MCF 10A (cell line): ENCODE measurements at regions of chr6 and their contacts with region 1.

Region 1: DNA sequence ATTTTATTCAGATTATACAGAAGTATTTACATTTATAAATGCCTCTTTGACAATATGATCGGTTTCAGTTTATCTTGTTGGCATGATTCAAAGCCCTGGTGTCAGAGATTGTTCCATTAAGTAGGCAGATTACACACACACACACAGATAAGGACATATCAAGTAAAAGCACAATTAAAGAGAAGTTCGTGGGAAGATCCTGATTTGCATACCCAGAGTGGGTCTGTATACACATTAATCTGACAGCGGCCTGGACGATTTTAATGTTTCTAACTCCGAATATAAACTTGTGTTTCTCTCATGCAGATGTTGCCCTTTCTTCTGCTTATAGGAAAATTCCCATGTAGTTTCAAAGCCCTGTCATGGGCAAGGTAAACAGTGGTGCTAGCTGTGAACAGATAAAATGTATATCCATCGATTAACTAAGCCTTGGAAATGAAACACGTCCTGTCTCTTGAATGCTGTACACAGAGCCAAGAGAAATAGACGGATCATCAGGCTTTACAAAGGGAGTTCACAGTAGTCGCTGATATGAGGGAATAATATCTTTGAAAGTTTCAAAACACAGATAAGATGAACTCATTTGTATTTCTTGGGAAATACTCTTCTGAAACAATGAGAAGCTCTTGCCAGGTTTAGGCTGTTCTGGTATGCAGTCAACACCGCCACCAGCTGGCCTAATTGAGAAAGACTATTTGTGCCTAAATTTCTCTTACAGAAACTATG is 108.2 kb upstream of the GMDS start:
- DNase-seq: peak; percentile 82
- H3K4me3 Mint-ChIP-seq: no peak overlapping the region
- H3K27ac Mint-ChIP-seq: no peak overlapping the region
- H3K4me1 Mint-ChIP-seq: peaks cover 9% of the 10 kb centered on the region
- H3K27me3 Mint-ChIP-seq: no peaks in the 10 kb centered on the region
- CTCF ChIP-seq: peak; percentile 85

Region 2: DNA sequence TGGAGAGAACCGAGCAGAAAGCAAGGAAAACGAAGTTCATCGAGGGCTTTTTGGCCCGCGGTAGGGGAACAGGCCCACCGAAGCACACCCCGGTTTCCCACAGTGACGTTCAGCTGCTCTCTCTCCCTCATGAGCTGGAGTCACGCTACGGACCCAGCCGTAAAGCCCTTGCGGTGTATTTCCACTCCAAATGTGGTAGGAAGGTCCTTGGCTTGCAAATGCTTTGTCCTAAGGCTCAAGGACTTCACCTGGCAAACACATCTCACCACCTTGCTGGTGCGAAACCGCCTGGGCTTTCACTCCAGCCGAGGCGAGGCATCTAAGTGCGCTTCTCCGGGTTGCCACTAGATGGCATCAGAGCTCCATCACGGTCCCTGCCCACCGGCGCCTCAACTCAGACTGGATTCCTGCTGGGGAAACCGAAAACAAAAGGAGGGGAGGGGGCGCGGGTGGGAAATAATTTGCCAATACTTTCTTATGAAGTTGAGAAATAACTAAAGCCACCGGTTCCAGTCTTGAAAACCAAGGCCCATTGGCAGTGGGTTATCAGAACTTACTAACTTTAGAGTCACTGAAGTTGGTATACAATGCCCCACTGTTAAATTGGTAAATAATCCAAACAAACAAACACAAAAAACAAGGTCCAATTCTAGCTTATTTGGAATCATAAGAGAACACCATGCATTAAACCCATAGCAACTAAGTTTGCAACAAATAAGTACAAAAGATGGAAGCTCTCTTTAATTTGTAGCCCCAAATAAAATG is 757.3 kb before region 1 on chr6:
- CTCF ChIA-PET with region 1: interaction called, 11 read pairs
- POLR2A ChIA-PET with region 1: interaction called, 4 read pairs
- intact Hi-C with region 1: loop called (anchors 2 kb)
- DNase-seq: peak; percentile 55
- H3K4me3 Mint-ChIP-seq: no peak overlapping the region
- H3K27ac Mint-ChIP-seq: no peak overlapping the region
- H3K4me1 Mint-ChIP-seq: peaks cover 28% of the 10 kb centered on the region
- H3K27me3 Mint-ChIP-seq: peaks cover 21% of the 10 kb centered on the region
- CTCF ChIP-seq: peak; percentile 93

Region 3: GRCh38 chr6:1792989-1793388 is 560.6 kb before region 1 on chr6:
- CTCF ChIA-PET with region 1: interaction called, 3 read pairs
- POLR2A ChIA-PET with region 1: no interaction called
- intact Hi-C with region 1: loop called (anchors 5 kb)
- DNase-seq: peak; percentile 62
- H3K4me3 Mint-ChIP-seq: no peak overlapping the region
- H3K27ac Mint-ChIP-seq: no peak overlapping the region
- H3K4me1 Mint-ChIP-seq: peaks cover 3% of the 10 kb centered on the region
- H3K27me3 Mint-ChIP-seq: no peaks in the 10 kb centered on the region
- CTCF ChIP-seq: peak; percentile 33

Region 4: DNA sequence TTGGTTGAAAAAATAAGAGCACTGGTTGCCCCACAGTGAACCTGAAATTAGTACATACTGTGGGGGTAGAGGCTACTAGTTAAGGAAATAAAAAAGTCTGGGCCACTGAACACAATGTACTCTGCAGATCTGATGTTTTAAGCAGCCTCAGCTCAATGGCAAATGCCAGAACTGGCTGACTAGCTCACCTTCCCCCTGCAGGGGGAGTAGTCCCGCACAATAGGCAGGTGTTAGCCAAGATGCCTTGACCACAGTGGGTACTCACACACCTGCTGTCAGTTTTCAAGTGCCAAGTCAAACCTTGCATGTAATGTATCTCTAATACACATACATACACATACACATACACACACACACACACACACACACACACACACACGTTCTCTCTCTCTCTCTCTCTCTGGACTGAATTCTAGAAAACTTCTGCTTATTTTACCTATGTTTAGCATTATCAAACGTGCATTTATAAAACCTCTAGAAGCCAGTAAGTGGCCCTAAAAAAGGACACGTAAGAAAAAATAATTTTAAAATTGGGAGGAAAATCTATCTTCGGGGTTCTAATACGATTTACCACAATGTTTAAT is 144.3 kb before region 1 on chr6:
- CTCF ChIA-PET with region 1: interaction called, 14 read pairs
- POLR2A ChIA-PET with region 1: no interaction called
- intact Hi-C with region 1: loop called (anchors 1 kb)
- DNase-seq: peak; percentile 82
- H3K4me3 Mint-ChIP-seq: no peak overlapping the region
- H3K27ac Mint-ChIP-seq: no peak overlapping the region
- H3K4me1 Mint-ChIP-seq: no peaks in the 10 kb centered on the region
- H3K27me3 Mint-ChIP-seq: no peaks in the 10 kb centered on the region
- CTCF ChIP-seq: peak; percentile 62

Region 5: DNA sequence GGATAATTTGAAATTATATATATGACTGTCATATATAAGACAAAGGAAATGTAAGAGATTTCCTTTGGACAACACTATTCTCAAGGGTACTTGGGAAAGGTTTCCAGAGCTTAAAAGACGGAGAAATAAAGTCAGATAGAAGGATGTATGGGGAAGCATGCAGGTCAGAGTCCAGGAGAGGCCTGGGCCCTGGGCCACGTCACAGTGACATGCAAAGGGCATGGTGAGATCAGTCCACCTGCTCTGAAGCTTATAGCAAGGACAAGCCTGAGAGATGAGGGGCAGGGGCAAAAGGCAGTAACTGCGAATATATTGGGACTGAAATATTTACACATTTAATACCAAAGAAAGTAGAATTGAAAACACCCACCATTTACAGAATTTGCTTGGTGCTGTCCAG is 83.5 kb before region 1 on chr6:
- CTCF ChIA-PET with region 1: no interaction called
- POLR2A ChIA-PET with region 1: no interaction called
- intact Hi-C with region 1: no loop called
- DNase-seq: no peak
- H3K4me3 Mint-ChIP-seq: no peak overlapping the region
- H3K27ac Mint-ChIP-seq: no peak overlapping the region
- H3K4me1 Mint-ChIP-seq: peaks cover 3% of the 10 kb centered on the region
- H3K27me3 Mint-ChIP-seq: no peaks in the 10 kb centered on the region
- CTCF ChIP-seq: no peak

Region 6: DNA sequence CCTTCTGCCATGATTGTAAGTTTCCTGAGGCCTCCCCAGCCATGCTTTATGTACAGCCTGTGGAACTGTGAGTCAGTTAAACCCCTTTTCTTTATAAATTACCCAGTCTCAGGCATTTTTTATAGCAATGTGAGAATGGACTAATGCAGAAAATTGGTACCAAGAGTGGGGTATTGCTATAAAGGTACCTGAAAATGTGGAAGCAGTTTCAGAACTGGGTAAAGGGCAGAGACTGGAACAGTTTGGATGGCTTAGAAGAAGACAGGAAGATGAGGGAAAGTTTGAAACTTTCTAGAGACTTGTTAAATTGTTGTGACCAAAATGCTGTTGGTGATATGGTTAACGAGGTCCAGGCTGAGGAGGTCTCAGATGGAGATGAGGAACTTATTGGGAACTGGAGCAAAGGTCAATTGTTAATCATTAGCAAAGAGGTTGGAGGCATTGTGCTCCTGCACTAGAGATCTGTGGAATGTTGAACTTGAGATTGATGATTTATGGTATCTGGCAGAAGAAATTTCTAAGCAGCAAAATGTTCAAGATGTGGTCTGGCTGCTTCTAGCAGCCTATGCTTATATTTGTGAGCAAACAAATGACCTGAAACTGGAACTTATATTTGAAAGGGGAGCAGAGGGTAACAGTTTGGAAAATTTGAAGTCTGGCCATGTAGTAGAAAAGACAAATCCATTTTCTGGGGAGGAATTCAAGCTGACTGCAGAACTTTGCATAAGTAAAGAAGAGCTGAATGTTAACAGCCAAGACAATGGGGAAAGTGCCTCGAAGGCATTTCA is 29.2 kb before region 1 on chr6:
- CTCF ChIA-PET with region 1: no interaction called
- POLR2A ChIA-PET with region 1: no interaction called
- intact Hi-C with region 1: no loop called
- DNase-seq: no peak
- H3K4me3 Mint-ChIP-seq: no peak overlapping the region
- H3K27ac Mint-ChIP-seq: no peak overlapping the region
- H3K4me1 Mint-ChIP-seq: no peaks in the 10 kb centered on the region
- H3K27me3 Mint-ChIP-seq: no peaks in the 10 kb centered on the region
- CTCF ChIP-seq: no peak

Region 7: GRCh38 chr6:2579241-2579761 is 225.7 kb after region 1 on chr6:
- CTCF ChIA-PET with region 1: no interaction called
- POLR2A ChIA-PET with region 1: no interaction called
- intact Hi-C with region 1: no loop called
- DNase-seq: no peak
- H3K4me3 Mint-ChIP-seq: no peak overlapping the region
- H3K27ac Mint-ChIP-seq: no peak overlapping the region
- H3K4me1 Mint-ChIP-seq: no peaks in the 10 kb centered on the region
- H3K27me3 Mint-ChIP-seq: no peaks in the 10 kb centered on the region
- CTCF ChIP-seq: no peak

Region 8: DNA sequence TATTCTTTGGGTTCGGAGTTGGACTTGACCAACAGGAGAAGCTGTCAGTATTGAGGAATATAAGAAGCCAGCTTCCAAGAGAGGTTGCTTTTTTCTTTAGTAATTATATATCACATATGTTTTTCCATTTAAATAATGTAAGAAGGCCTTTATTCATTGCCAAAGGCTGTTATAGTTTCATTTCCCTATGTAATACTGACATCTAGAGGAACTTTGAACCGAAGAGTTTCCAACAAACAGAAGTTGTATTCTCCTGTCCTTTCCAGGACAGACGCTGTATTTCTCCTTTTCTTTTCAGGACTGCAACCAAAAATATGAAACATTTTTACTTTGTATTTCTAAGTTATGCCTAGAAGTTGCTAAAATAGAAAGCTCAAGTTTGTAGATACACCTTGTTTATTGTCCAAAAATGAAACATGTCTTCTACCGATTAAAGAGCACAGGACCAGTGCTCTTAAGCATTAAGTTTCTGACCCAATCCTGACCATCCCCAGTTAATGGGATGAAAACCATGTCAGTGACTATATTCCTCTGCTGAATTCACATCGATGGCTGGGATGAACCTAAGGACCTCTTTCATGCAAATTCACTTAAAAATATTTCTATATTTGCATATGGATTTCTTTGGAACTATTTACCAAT is 342.0 kb after region 1 on chr6:
- CTCF ChIA-PET with region 1: no interaction called
- POLR2A ChIA-PET with region 1: no interaction called
- intact Hi-C with region 1: loop called (anchors 1 kb)
- DNase-seq: peak; percentile 43
- H3K4me3 Mint-ChIP-seq: no peak overlapping the region
- H3K27ac Mint-ChIP-seq: no peak overlapping the region
- H3K4me1 Mint-ChIP-seq: no peaks in the 10 kb centered on the region
- H3K27me3 Mint-ChIP-seq: no peaks in the 10 kb centered on the region
- CTCF ChIP-seq: peak; percentile 64